ENCODE measurements at regions of chr14 and their contacts with region 1.

Region 1: DNA sequence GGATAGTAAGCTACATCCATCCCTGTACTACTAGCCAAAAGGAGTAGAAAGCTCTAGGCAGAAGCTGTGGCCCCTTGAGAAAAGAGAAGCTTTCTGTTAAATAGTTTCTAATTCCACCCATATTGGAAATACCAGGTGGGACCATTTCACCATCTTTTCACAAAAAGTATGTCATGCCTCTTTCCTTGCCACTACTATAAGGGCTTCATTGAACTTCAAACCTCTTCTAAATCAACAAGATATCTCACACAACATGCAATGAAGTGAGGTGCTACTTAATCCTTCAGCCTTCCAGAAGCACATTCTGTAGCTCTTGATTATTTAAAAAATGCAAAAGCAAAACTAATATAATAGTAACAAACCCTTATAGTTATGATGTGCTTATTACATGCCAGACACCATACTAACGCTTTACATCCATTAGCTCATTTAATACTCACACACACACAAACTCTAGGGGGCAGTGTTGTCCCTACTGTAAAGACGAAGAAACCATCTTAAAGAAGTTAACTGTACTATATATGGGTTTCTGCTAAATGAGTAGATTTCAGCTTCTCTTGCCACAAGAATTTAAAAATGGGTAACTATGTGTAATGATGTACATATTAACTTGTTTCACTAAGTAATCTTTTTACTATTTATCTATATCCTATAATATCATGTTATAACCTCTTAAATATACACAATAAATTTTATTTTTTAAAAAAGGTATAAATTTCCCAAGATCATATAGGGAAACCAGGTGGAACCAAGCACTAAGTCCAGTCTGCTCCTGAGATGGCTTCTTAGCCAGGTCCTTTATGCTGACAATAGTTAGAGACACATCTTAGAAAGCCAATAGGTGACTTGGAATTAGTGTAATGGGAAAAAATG is 124.4 kb downstream of the RPS29 start:
- DNase-seq: peak; percentile 63 to 68 (median 67)
- H3K4me3 ChIP-seq: no peak overlapping the region
- H3K4me3 Mint-ChIP-seq: no peak overlapping the region
- H3K27ac ChIP-seq: no peak overlapping the region
- H3K27ac Mint-ChIP-seq: no peak overlapping the region
- H3K4me1 ChIP-seq: no peaks in the 10 kb centered on the region
- H3K4me1 Mint-ChIP-seq: no peaks in the 10 kb centered on the region
- H3K27me3 ChIP-seq: no peaks in the 10 kb centered on the region
- H3K27me3 Mint-ChIP-seq: peaks cover 2 to 3% of the 10 kb centered on the region in 2 donors

Region 2: DNA sequence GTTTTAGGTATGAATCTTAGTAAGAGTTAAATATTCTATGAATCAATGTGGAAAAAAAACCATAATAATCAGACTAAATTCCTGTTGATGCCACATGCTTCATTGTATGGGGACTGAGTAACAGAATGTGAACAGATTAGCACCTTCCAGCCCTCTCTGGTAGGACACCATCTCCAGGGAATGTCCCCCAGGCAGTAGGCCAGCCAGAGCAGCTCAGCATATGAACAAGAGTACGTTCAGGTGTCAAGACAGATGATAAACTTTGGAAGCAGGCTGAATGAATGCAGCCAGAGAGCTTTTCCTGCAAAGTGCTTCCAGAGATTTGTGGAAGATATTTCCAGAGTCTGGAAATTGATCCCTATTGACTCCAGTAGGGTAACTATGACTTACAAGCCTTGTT is 80.0 kb before region 1 on chr14:
- CTCF ChIA-PET with region 1: no interaction called
- POLR2A ChIA-PET with region 1: no interaction called
- intact Hi-C with region 1: no loop called
- DNase-seq: no peak
- H3K4me3 ChIP-seq: no peak overlapping the region
- H3K4me3 Mint-ChIP-seq: no peak overlapping the region
- H3K27ac ChIP-seq: no peak overlapping the region
- H3K27ac Mint-ChIP-seq: no peak overlapping the region
- H3K4me1 ChIP-seq: no peaks in the 10 kb centered on the region
- H3K4me1 Mint-ChIP-seq: no peaks in the 10 kb centered on the region
- H3K27me3 ChIP-seq: no peaks in the 10 kb centered on the region
- H3K27me3 Mint-ChIP-seq: peaks cover 12 to 17% of the 10 kb centered on the region in 2 donors

Region 3: DNA sequence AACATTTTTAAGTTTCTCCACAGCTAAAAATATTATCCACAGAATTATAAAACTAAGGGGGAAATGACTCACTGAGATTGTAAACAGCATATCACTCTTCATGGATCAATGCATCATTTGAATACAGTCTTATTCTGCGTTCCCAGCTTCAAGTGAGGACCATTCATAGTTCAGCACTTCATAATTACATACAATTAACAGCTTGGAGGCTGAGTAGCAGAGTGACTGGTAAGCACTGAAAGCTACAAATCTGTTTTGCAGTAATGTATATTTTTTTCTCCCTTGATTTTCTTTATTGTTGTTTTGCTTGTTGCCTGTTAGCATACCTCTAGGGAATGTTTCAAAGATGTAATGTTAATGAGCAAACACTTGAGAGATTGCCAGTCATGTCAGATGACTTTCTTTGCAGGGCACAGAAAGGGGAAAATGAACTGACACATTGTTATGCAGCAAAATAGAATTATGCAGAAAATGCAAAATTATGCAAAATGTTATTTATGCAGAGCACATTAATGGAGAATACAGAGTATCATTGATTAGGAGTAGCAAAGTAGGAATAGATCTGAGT is 14.1 kb before region 1 on chr14:
- CTCF ChIA-PET with region 1: interaction called, 22 read pairs
- POLR2A ChIA-PET with region 1: no interaction called
- intact Hi-C with region 1: no loop called
- DNase-seq: no peak
- H3K4me3 ChIP-seq: no peak overlapping the region
- H3K4me3 Mint-ChIP-seq: no peak overlapping the region
- H3K27ac ChIP-seq: no peak overlapping the region
- H3K27ac Mint-ChIP-seq: no peak overlapping the region
- H3K4me1 ChIP-seq: no peaks in the 10 kb centered on the region
- H3K4me1 Mint-ChIP-seq: no peaks in the 10 kb centered on the region
- H3K27me3 ChIP-seq: no peaks in the 10 kb centered on the region
- H3K27me3 Mint-ChIP-seq: peaks cover 7 to 16% of the 10 kb centered on the region in 2 donors

Region 4: GRCh38 chr14:49497725-49498348 is 36.1 kb after region 1 on chr14:
- CTCF ChIA-PET with region 1: interaction called, 70 read pairs
- POLR2A ChIA-PET with region 1: no interaction called
- intact Hi-C with region 1: loop called (anchors 1 kb)
- DNase-seq: peak in 4 of 5 donors; percentile 37 to 46 (median 42)
- H3K4me3 ChIP-seq: no peak overlapping the region
- H3K4me3 Mint-ChIP-seq: no peak overlapping the region
- H3K27ac ChIP-seq: no peak overlapping the region
- H3K27ac Mint-ChIP-seq: no peak overlapping the region
- H3K4me1 ChIP-seq: no peaks in the 10 kb centered on the region
- H3K4me1 Mint-ChIP-seq: peaks cover 0 to 2% (median 0%) of the 10 kb centered on the region in 4 donors
- H3K27me3 ChIP-seq: no peaks in the 10 kb centered on the region
- H3K27me3 Mint-ChIP-seq: peaks cover 19 to 34% of the 10 kb centered on the region in 2 donors

Region 5: GRCh38 chr14:49828640-49829039 is 366.9 kb after region 1 on chr14:
- CTCF ChIA-PET with region 1: interaction called, 33 read pairs
- POLR2A ChIA-PET with region 1: no interaction called
- intact Hi-C with region 1: no loop called
- DNase-seq: no peak
- H3K4me3 ChIP-seq: no peak overlapping the region
- H3K4me3 Mint-ChIP-seq: no peak overlapping the region
- H3K27ac ChIP-seq: no peak overlapping the region
- H3K27ac Mint-ChIP-seq: no peak overlapping the region
- H3K4me1 ChIP-seq: no peaks in the 10 kb centered on the region
- H3K4me1 Mint-ChIP-seq: peaks cover 0 to 9% (median 2%) of the 10 kb centered on the region in 4 donors
- H3K27me3 ChIP-seq: no peaks in the 10 kb centered on the region
- H3K27me3 Mint-ChIP-seq: no peaks in the 10 kb centered on the region

Region 6: DNA sequence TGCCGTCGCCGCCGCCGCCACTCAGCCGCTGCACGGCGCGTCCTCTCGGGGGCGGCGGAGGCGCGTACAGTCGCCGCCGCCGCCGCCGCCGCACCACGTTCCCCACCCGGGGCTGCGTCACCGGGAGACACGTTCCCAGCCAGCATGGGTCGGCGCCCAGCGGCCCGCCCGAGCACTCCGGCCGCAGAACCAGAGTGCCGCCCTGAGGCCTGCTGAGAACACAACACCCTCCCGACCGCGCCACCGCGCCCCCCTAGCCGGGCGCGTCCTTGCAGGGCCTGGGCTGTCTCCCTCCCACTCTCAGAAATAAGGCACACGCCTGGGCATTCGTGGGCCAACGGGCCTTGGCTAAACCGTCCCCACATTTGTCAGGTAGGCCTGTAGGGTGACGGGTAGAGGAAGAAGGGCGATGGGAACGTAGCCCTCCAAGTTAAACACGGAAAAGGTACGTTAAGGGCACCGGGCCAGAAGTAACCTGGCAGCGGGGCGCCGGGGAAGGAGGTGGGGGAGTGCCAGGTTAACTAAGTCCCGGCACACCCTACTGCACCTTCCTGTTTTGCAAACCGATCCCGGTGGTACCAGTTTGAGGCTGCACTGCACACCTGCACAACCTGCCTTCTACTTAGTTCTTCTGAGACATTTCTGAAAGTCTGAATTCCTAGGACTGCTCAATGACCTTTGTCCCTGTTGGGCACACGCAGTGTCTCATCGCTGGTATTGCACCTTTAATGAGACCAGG is 1070.9 kb after region 1 on chr14 and contains the start of gene MAP4K5:
- CTCF ChIA-PET with region 1: no interaction called
- POLR2A ChIA-PET with region 1: no interaction called
- intact Hi-C with region 1: loop called (anchors 2 kb)
- DNase-seq: peak; percentile 85 to 89 (median 88)
- H3K4me3 ChIP-seq: peak within 1 kb of the TSS; percentile 26 to 68
- H3K4me3 Mint-ChIP-seq: peak within 1 kb of the TSS; percentile 88 to 94 (median 93)
- H3K27ac ChIP-seq: peak within 1 kb of the TSS; percentile 69
- H3K27ac Mint-ChIP-seq: peak within 1 kb of the TSS; percentile 85 to 95 (median 91)
- H3K4me1 ChIP-seq: peaks cover 46% of the 10 kb centered on the region
- H3K4me1 Mint-ChIP-seq: peaks cover 33 to 50% (median 43%) of the 10 kb centered on the region in 4 donors
- H3K27me3 ChIP-seq: no peaks in the 10 kb centered on the region
- H3K27me3 Mint-ChIP-seq: no peaks in the 10 kb centered on the region
- total RNA-seq, gene MAP4K5: 42.6 to 43.0 TPM

Measured in CD4-positive, alpha-beta memory T cell (primary cell).